ENCODE measurements at regions of chr9 and their contacts with region 1.

Region 1: GRCh38 chr9:135355521-135356011 is 124.0 kb upstream of the PPP1R26 start:
- DNase-seq: no peak
- ATAC-seq: no peak
- H3K4me3 ChIP-seq: no peak overlapping the region
- H3K27ac ChIP-seq: no peak overlapping the region
- H3K4me1 ChIP-seq: no peaks in the 10 kb centered on the region
- H3K27me3 ChIP-seq: 0 out of 2 replicates have a peak, but pooled peaks cover 1% of the 10 kb centered on the region
- CTCF ChIP-seq: no peak
- POLR2A ChIP-seq: no peak
- RAD21 ChIP-seq: no peak

Region 2: GRCh38 chr9:135269923-135270830 is 85.4 kb before region 1 on chr9:
- CTCF ChIA-PET with region 1: no interaction called
- POLR2A ChIA-PET with region 1: no interaction called
- RAD21 ChIA-PET with region 1: interaction called in 1 of 2 experiments, 12 read pairs
- intact Hi-C with region 1: no loop called
- DNase-seq: no peak
- ATAC-seq: no peak
- H3K4me3 ChIP-seq: no peak overlapping the region
- H3K27ac ChIP-seq: no peak overlapping the region
- H3K4me1 ChIP-seq: peaks cover 5 to 7% of the 10 kb centered on the region in 2 experiments; a peak in 3 of 4 replicates
- H3K27me3 ChIP-seq: peaks cover 23% of the 10 kb centered on the region; the same call in 1 of the 2 replicates
- CTCF ChIP-seq: no peak
- POLR2A ChIP-seq: no peak
- RAD21 ChIP-seq: no peak

Region 3: GRCh38 chr9:135422341-135422944 is 66.9 kb after region 1 on chr9:
- CTCF ChIA-PET with region 1: no interaction called
- POLR2A ChIA-PET with region 1: no interaction called
- RAD21 ChIA-PET with region 1: no interaction called
- intact Hi-C with region 1: no loop called
- DNase-seq: no peak
- ATAC-seq: no peak
- H3K4me3 ChIP-seq: no peak overlapping the region
- H3K27ac ChIP-seq: no peak overlapping the region
- H3K4me1 ChIP-seq: no peaks in the 10 kb centered on the region
- H3K27me3 ChIP-seq: no peaks in the 10 kb centered on the region
- CTCF ChIP-seq: no peak
- POLR2A ChIP-seq: no peak
- RAD21 ChIP-seq: no peak

Region 4: GRCh38 chr9:136093995-136094881 is 738.7 kb after region 1 on chr9:
- CTCF ChIA-PET with region 1: no interaction called
- POLR2A ChIA-PET with region 1: no interaction called
- RAD21 ChIA-PET with region 1: no interaction called
- intact Hi-C with region 1: no loop called
- DNase-seq: peak; percentile 32
- ATAC-seq: peak; percentile 66
- H3K4me3 ChIP-seq: peak overlapping the region; percentile 78 to 88
- H3K27ac ChIP-seq: peak overlapping the region; percentile 97
- H3K4me1 ChIP-seq: peaks cover 34 to 54% of the 10 kb centered on the region in 2 experiments
- H3K27me3 ChIP-seq: no peaks in the 10 kb centered on the region
- CTCF ChIP-seq: no peak
- POLR2A ChIP-seq: no peak
- RAD21 ChIP-seq: no peak